ENCODE measurements at regions of chr19 and their contacts with region 1.

Region 1: DNA sequence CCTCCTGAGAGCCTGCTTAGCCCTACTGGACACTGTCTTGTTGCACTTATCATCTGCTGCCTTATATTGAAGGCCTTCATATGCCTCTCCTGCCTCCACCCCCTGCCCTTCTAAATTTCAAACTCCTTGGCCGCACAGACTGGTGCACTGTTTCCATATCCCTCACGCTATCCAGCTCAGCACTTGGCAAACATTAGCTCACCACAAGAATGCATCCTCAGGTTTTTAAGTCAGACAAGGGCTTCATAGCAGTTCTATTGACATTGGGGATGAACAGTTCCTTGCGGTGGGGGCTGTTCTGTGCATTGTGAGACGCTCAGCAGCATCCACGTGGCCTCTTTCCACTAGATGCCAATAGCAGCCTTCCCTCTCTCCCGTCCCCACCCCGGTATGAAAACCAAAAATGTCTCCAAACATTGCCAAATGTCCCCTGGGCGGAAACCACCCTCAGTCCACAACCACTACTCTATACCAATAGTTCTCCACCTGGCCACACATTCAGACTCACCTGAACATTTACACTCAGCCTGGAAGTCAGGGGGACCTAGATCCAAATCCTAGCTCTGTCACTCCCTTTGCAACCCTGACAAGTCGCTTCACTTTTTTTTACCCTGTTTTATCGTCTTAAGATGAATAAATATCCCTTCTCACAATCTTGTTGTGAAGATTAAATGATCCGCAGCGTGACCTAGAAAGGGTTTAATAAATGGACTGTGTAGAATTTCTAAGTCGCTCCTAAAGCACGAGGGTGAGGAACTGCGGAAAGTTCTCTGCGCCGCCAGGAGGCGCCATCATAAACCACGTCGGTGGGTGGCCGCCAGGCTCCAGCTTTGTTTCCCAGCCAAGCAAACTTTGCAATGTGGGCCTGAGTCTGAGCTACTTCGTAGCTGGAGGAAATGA is 3.6 kb upstream of the CEACAM3 start:
- DNase-seq: no peak
- H3K27ac ChIP-seq: no peak overlapping the region
- CTCF ChIP-seq: 0 out of 2 replicates have a peak, but pooled peaks have one; percentile 24

Region 2: DNA sequence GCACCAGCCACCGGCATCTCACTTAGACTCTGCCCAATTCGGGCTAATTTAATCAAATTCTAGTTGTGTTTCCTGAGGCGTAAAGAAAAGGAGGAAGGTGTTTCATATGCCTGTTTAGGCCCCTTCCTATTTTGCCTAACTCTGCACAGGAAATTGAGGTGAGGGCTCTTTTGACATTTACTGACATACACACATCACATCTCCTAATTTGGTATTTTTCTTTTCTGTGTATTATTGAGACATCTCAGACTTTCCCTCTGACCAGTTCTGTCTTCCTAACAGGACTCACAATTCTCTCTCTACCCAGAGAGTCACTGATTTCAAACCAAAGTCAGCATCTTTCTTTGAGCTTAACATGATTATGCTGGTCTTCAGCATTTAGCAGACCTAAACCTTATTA is 11.6 kb after region 1 on chr19:
- CTCF ChIA-PET with region 1: interaction called, 12 read pairs
- POLR2A ChIA-PET with region 1: no interaction called
- DNase-seq: no peak
- H3K27ac ChIP-seq: no peak overlapping the region
- CTCF ChIP-seq: no peak

Region 3: GRCh38 chr19:41821003-41821735 is 28.4 kb after region 1 on chr19:
- CTCF ChIA-PET with region 1: interaction called, 12 read pairs
- POLR2A ChIA-PET with region 1: no interaction called
- DNase-seq: peak; percentile 59
- H3K27ac ChIP-seq: no peak overlapping the region
- CTCF ChIP-seq: 0 out of 2 replicates have a peak, but pooled peaks have one; percentile 15

Region 4: DNA sequence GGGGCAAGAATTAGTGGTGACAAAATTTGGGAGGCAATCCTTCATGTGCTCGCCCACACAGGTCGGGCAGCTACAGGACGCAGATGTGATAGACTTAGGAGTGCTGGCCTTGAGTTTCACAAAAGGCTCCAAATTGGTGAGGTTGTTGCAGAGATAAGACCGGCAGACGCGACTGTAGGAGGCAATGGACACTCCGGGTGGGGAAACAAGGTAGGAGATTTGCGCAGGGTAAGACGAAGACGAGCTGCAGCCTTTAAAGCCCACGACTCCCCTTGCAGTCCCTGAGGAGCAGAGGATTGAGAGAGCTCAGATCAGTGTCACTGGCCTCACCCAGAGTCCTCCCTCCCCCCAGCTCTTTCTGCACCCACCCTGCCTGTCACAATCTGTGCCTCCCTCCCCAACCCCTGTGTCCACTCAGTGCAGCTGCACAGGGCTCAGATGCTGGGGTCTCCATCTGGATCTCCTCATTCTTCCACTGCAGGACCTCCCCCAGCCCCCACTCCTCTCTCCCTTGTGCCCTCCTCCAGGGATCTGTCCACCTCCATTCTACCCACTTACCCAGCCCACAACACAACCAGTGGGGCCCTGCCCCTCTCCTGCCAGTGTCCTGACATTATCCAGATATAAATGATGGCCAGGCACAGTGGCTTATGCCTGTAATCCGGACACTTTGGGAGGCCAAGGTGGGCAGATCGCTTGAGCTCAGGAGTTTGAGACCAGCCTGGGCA is 45.4 kb after region 1 on chr19:
- CTCF ChIA-PET with region 1: interaction called, 10 read pairs
- POLR2A ChIA-PET with region 1: no interaction called
- DNase-seq: no peak
- H3K27ac ChIP-seq: no peak overlapping the region
- CTCF ChIP-seq: no peak

Measured in RWPE1 (cell line).